GM12878 (cell line): ENCODE measurements at regions of chr13 and their contacts with region 1.

Region 1: DNA sequence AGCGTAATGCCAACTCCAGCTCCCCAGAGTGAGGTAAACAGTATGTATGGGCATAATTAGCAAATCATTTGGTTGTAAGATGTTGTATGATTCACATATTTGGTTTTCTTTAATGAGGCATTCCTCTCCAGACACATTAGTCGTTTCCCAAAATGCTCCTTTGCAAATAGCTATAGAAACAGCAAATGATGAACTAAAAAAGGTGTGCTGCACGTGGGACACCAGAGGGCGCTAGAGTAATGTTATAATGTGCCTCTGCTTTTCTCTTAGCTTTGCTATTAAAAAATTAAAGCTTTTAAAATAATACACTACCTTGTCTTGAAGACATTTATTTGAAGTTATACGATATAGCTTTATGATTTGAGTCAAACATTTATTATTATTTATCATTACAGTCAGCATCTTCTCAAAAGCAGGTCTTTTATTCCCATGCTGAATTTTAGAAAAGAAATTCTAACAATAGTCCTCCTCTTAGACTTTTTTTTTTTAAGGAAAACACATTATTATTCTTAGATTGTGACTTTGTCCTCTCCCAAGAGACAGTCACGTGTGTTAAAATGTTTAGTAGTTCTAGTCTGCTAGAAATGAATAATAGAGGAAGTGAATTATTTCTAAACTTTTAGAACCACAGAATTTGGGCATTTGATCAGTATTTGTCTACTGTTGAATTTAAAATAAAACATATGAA is 121.6 kb upstream of the FRY start:
- DNase-seq: peak; percentile 37
- ATAC-seq: peak; percentile 73
- H3K4me3 ChIP-seq: no peak overlapping the region
- H3K27ac ChIP-seq: no peak overlapping the region
- H3K4me1 ChIP-seq: no peaks in the 10 kb centered on the region
- H3K27me3 ChIP-seq: no peaks in the 10 kb centered on the region; a peak in 2 of 4 replicates
- CTCF ChIP-seq: peak; percentile 73 to 86 (median 84)
- EP300 ChIP-seq: peak in 1 of 2 experiments; percentile 39; a peak in 1 of 4 replicates
- POLR2A ChIP-seq: no peak
- RAD21 ChIP-seq: peak; percentile 91

Region 2: GRCh38 chr13:31797154-31797775 is 112.7 kb before region 1 on chr13:
- CTCF ChIA-PET with region 1: no interaction called
- POLR2A ChIA-PET with region 1: no interaction called
- RAD21 ChIA-PET with region 1: no interaction called
- SMC1A ChIA-PET with region 1: no interaction called
- in situ Hi-C with region 1: no loop called
- intact Hi-C with region 1: no loop called
- DNase-seq: no peak
- ATAC-seq: no peak
- H3K4me3 ChIP-seq: no peak overlapping the region
- H3K27ac ChIP-seq: no peak overlapping the region
- H3K4me1 ChIP-seq: no peaks in the 10 kb centered on the region
- H3K27me3 ChIP-seq: no peaks in the 10 kb centered on the region
- CTCF ChIP-seq: no peak; a peak in 1 of 6 replicates
- EP300 ChIP-seq: no peak
- POLR2A ChIP-seq: no peak
- RAD21 ChIP-seq: no peak

Region 3: DNA sequence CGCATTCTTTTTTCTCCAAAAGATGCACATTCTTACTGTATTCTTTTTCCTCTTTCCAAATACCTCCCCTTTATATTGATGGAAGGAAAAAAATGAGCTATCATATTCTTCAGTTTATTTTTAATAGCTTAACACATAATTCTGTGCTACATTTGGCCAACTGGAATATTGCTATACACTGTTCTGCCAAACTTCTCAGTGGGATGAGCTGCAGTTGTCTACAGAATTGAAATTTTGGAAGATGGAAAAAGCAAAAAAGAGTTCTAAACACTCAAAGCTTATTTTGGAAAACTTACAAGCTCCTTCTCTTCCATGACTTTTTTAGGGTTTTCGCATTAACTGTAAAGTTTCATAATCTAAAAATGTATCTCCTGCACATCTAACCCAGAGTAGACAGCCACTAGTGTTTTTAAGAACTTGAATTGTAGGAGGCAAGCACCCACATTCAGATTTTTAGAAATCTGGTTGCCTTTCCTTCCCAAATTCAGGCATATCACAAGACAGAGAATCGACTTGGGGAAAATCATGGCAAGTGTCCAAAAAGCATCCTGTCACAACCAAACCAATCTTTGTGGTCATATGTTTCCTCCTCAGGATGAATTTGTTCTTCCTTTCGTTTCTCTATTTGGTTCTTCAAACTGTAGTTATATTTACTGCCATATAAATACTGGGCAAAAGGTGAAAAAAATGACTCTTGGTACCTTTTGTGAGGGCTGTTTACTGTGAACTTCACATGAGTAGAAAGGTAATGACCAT is 10.1 kb after region 1 on chr13:
- CTCF ChIA-PET with region 1: interaction called, 42 read pairs
- POLR2A ChIA-PET with region 1: no interaction called
- RAD21 ChIA-PET with region 1: interaction called, 29 read pairs
- SMC1A ChIA-PET with region 1: interaction called, 13 read pairs
- in situ Hi-C with region 1: no loop called
- intact Hi-C with region 1: no loop called
- DNase-seq: no peak
- ATAC-seq: no peak; the same call in 2 of the 3 replicates
- H3K4me3 ChIP-seq: no peak overlapping the region
- H3K27ac ChIP-seq: no peak overlapping the region
- H3K4me1 ChIP-seq: peaks cover 9% of the 10 kb centered on the region; the same call in 1 of the 2 replicates
- H3K27me3 ChIP-seq: no peaks in the 10 kb centered on the region
- CTCF ChIP-seq: no peak
- EP300 ChIP-seq: no peak
- POLR2A ChIP-seq: no peak
- RAD21 ChIP-seq: no peak

Region 4: DNA sequence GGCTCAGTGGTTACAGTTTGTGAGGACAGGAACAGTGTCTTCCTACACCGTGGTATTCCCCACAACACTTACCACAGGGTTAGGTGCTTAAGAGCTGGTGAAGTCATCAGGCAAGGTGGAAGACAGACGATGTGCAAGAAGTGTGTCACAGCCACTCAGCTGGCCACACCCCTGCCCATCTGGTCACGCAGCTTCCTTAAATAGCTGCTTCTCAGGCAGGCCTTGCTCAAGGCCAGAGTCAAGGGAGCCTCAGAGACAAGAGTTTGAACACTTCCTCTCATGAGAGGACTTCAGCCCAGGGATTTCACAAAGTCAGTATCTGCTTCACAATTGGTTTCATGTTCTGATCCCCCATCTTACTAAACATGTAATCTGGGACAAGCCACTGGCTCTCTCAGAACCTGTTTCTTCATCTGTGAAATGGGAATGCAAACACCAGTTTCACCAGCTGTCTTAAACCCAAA is 41.2 kb after region 1 on chr13:
- CTCF ChIA-PET with region 1: interaction called, 18 read pairs
- POLR2A ChIA-PET with region 1: interaction called, 5 read pairs
- RAD21 ChIA-PET with region 1: interaction called, 26 read pairs
- SMC1A ChIA-PET with region 1: interaction called, 16 read pairs
- in situ Hi-C with region 1: no loop called
- intact Hi-C with region 1: no loop called
- DNase-seq: peak; percentile 89
- ATAC-seq: peak; percentile 96
- H3K4me3 ChIP-seq: no peak overlapping the region; the same call in 1 of the 2 replicates
- H3K27ac ChIP-seq: peak overlapping the region; percentile 63
- H3K4me1 ChIP-seq: peaks cover 22% of the 10 kb centered on the region
- H3K27me3 ChIP-seq: no peaks in the 10 kb centered on the region
- CTCF ChIP-seq: no peak
- EP300 ChIP-seq: peak; percentile 92 to 93; a peak in 2 of 4 replicates
- POLR2A ChIP-seq: peak; percentile 63
- RAD21 ChIP-seq: no peak

Region 5: GRCh38 chr13:32007494-32007893 is 97.5 kb after region 1 on chr13:
- CTCF ChIA-PET with region 1: interaction called, 8 read pairs
- POLR2A ChIA-PET with region 1: no interaction called
- RAD21 ChIA-PET with region 1: interaction called, 4 read pairs
- SMC1A ChIA-PET with region 1: interaction called, 13 read pairs
- in situ Hi-C with region 1: no loop called
- intact Hi-C with region 1: no loop called
- DNase-seq: no peak
- ATAC-seq: no peak
- H3K4me3 ChIP-seq: no peak overlapping the region
- H3K27ac ChIP-seq: no peak overlapping the region
- H3K4me1 ChIP-seq: no peaks in the 10 kb centered on the region
- H3K27me3 ChIP-seq: no peaks in the 10 kb centered on the region
- CTCF ChIP-seq: no peak
- EP300 ChIP-seq: no peak
- POLR2A ChIP-seq: no peak
- RAD21 ChIP-seq: no peak

Region 6: GRCh38 chr13:32246468-32246867 is 336.5 kb after region 1 on chr13:
- CTCF ChIA-PET with region 1: interaction called, 19 read pairs
- POLR2A ChIA-PET with region 1: no interaction called
- RAD21 ChIA-PET with region 1: interaction called, 6 read pairs
- SMC1A ChIA-PET with region 1: interaction called, 6 read pairs
- in situ Hi-C with region 1: no loop called
- intact Hi-C with region 1: no loop called
- DNase-seq: no peak
- ATAC-seq: peak; percentile 98
- H3K4me3 ChIP-seq: no peak overlapping the region
- H3K27ac ChIP-seq: no peak overlapping the region
- H3K4me1 ChIP-seq: peaks cover 9% of the 10 kb centered on the region
- H3K27me3 ChIP-seq: no peaks in the 10 kb centered on the region
- CTCF ChIP-seq: peak; percentile 68 to 81 (median 73)
- EP300 ChIP-seq: no peak
- POLR2A ChIP-seq: no peak
- RAD21 ChIP-seq: peak; percentile 55

Region 7: GRCh38 chr13:32581177-32581786 is 671.3 kb after region 1 on chr13:
- CTCF ChIA-PET with region 1: interaction called, 35 read pairs
- POLR2A ChIA-PET with region 1: no interaction called
- RAD21 ChIA-PET with region 1: interaction called, 34 read pairs
- SMC1A ChIA-PET with region 1: interaction called, 18 read pairs
- in situ Hi-C with region 1: no loop called
- intact Hi-C with region 1: no loop called
- DNase-seq: no peak
- ATAC-seq: no peak
- H3K4me3 ChIP-seq: no peak overlapping the region
- H3K27ac ChIP-seq: no peak overlapping the region
- H3K4me1 ChIP-seq: peaks cover 4% of the 10 kb centered on the region; the same call in 1 of the 2 replicates
- H3K27me3 ChIP-seq: no peaks in the 10 kb centered on the region
- CTCF ChIP-seq: peak; percentile 40 to 63 (median 46); a peak in 5 of 6 replicates
- EP300 ChIP-seq: no peak
- POLR2A ChIP-seq: no peak
- RAD21 ChIP-seq: peak; percentile 60